Endothelial cell of umbilical vein (primary cell): ENCODE measurements at regions of chr12 and their contacts with region 1.

Region 1: GRCh38 chr12:12786716-12787601 is 1.5 kb downstream of the APOLD1 start:
- DNase-seq: peak; percentile 88
- H3K4me3 ChIP-seq: peak overlapping the region; percentile 6 to 44 (median 39)
- H3K27ac ChIP-seq: peak overlapping the region; percentile 78
- H3K4me1 ChIP-seq: peaks cover 43% of the 10 kb centered on the region
- H3K27me3 ChIP-seq: no peaks in the 10 kb centered on the region
- CTCF ChIP-seq: peak in 1 of 2 donors; percentile 8
- POLR2A ChIP-seq: peak; percentile 91

Region 2: GRCh38 chr12:11906286-11906935 is 880.5 kb before region 1 on chr12:
- CTCF ChIA-PET with region 1: no interaction called
- POLR2A ChIA-PET with region 1: no interaction called
- dilution Hi-C with region 1: no loop called
- intact Hi-C with region 1: no loop called
- DNase-seq: no peak
- H3K4me3 ChIP-seq: no peak overlapping the region
- H3K27ac ChIP-seq: no peak overlapping the region
- H3K4me1 ChIP-seq: no peaks in the 10 kb centered on the region
- H3K27me3 ChIP-seq: peaks cover 2 to 14% of the 10 kb centered on the region in 2 experiments
- CTCF ChIP-seq: no peak
- POLR2A ChIP-seq: no peak

Region 3: GRCh38 chr12:12724661-12725545 is 62.1 kb before region 1 on chr12:
- CTCF ChIA-PET with region 1: interaction called, 4 read pairs
- POLR2A ChIA-PET with region 1: interaction called, 3 read pairs
- dilution Hi-C with region 1: no loop called
- intact Hi-C with region 1: loop called (anchors 2 kb)
- DNase-seq: peak; percentile 98
- H3K4me3 ChIP-seq: peak overlapping the region; percentile 13 to 97 (median 95)
- H3K27ac ChIP-seq: peak overlapping the region; percentile 98
- H3K4me1 ChIP-seq: peaks cover 38% of the 10 kb centered on the region
- H3K27me3 ChIP-seq: no peaks in the 10 kb centered on the region
- CTCF ChIP-seq: no peak
- POLR2A ChIP-seq: peak; percentile 75

Region 4: DNA sequence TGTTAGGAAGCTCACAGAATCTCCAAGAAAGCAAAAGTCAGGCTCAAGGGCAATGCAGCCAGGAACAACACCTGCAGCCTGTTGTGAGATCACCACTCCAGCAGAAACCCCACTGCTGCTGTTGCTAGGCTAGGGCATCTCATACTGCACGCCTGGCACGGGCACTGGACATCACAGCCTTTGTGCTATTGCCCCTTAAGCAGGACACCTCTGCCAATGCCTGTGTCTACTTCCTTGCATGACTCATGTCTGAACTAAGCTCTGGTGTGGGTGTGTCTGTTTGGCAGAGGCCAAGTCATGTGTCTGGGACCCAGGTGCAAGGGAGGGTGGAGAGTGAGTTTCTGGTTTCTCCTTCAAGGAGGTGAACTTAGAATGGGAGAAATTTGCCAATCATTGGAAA is 16.2 kb after region 1 on chr12:
- CTCF ChIA-PET with region 1: interaction called, 27 read pairs
- POLR2A ChIA-PET with region 1: interaction called, 5 read pairs
- dilution Hi-C with region 1: no loop called
- intact Hi-C with region 1: loop called (anchors 1 kb)
- DNase-seq: peak; percentile 89
- H3K4me3 ChIP-seq: no peak overlapping the region
- H3K27ac ChIP-seq: peak overlapping the region; percentile 95
- H3K4me1 ChIP-seq: peaks cover 36% of the 10 kb centered on the region
- H3K27me3 ChIP-seq: no peaks in the 10 kb centered on the region
- CTCF ChIP-seq: no peak
- POLR2A ChIP-seq: no peak

Region 5: DNA sequence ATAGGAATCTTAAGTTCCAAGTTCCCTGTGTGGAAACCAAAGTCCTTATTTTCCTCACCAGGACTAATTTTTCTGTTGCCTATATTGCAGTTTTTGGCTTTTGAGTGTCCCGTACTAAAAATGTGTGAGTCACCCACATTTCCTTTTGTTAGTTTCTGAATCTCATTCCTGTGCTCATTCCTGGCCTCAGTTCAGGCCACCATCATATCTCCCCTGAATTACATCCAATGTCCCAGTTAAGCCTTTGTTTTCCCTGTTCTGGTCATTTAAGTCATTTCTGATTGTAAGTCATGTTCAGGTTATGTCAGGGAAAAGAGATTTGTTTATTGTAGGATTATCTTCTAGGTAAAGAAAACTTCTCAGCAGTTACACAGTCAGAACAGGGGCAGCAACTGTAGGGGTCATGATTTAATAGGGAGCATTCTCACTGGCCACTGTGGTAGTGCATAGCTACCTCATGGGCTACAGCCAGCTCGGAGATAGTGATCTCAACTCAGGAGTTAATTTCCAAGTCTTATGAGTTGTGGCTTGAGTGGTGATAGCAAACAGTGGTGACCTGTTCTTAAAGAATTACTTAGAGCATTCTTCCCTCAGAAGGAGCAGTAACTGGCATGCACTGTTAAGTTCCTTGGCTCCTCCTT is 32.8 kb after region 1 on chr12:
- CTCF ChIA-PET with region 1: interaction called, 11 read pairs
- POLR2A ChIA-PET with region 1: no interaction called
- dilution Hi-C with region 1: no loop called
- intact Hi-C with region 1: no loop called
- DNase-seq: peak; percentile 85
- H3K4me3 ChIP-seq: peak overlapping the region in 1 of 3 experiments; percentile 15
- H3K27ac ChIP-seq: peak overlapping the region; percentile 93
- H3K4me1 ChIP-seq: peaks cover 49% of the 10 kb centered on the region
- H3K27me3 ChIP-seq: no peaks in the 10 kb centered on the region
- CTCF ChIP-seq: no peak
- POLR2A ChIP-seq: no peak

Region 6: GRCh38 chr12:12890815-12891645 is 104.1 kb after region 1 on chr12 and contains the start of gene GPRC5A:
- CTCF ChIA-PET with region 1: interaction called, 5 read pairs
- POLR2A ChIA-PET with region 1: interaction called, 3 read pairs
- dilution Hi-C with region 1: no loop called
- intact Hi-C with region 1: loop called (anchors 5 kb)
- DNase-seq: peak; percentile 96
- H3K4me3 ChIP-seq: peak within 1 kb of the TSS; percentile 42 to 55 (median 50)
- H3K27ac ChIP-seq: peak within 1 kb of the TSS; percentile 93
- H3K4me1 ChIP-seq: peaks cover 22% of the 10 kb centered on the region
- H3K27me3 ChIP-seq: no peaks in the 10 kb centered on the region
- CTCF ChIP-seq: peak in 1 of 2 donors; percentile 33
- POLR2A ChIP-seq: peak; percentile 86
- total RNA-seq, gene GPRC5A: 17.6 and 22.7 TPM in 2 replicates

Region 7: GRCh38 chr12:12983420-12984035 is 196.6 kb after region 1 on chr12:
- CTCF ChIA-PET with region 1: interaction called, 18 read pairs
- POLR2A ChIA-PET with region 1: no interaction called
- dilution Hi-C with region 1: no loop called
- intact Hi-C with region 1: loop called (anchors 1 kb)
- DNase-seq: peak; percentile 78
- H3K4me3 ChIP-seq: no peak overlapping the region
- H3K27ac ChIP-seq: peak overlapping the region; percentile 25
- H3K4me1 ChIP-seq: peaks cover 20% of the 10 kb centered on the region
- H3K27me3 ChIP-seq: no peaks in the 10 kb centered on the region
- CTCF ChIP-seq: peak; percentile 56 to 60
- POLR2A ChIP-seq: no peak

Region 8: DNA sequence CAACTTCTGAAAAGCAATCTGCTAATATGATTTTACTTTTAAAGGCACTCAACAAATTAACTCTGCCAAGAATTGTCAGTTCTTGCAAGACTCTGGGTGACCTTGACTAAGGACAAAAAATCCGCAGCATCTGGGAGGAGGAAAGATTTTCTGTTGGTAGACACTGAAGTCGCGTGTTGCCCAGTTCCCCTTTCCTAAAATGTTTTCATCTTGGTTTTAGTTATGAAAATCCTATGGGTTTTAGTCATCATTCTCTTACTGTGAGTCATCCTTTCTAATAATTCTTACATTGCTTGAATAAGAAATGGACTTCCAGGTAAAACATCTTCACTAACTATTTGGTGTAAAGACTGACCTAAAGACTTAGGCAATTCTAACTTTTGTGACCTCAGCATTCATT is 307.4 kb after region 1 on chr12:
- CTCF ChIA-PET with region 1: no interaction called
- POLR2A ChIA-PET with region 1: no interaction called
- dilution Hi-C with region 1: no loop called
- intact Hi-C with region 1: loop called (anchors 1 kb)
- DNase-seq: peak; percentile 30
- H3K4me3 ChIP-seq: no peak overlapping the region
- H3K27ac ChIP-seq: peak overlapping the region; percentile 59
- H3K4me1 ChIP-seq: peaks cover 42% of the 10 kb centered on the region
- H3K27me3 ChIP-seq: no peaks in the 10 kb centered on the region
- CTCF ChIP-seq: no peak
- POLR2A ChIP-seq: no peak